ENCODE measurements at regions of chr11 and their contacts with region 1.

Region 1: GRCh38 chr11:83071567-83072349 is at the start of gene RAB30:
- DNase-seq: peak; percentile 86 to 99 (median 98)
- H3K4me3 ChIP-seq: peak within 1 kb of the TSS; percentile 61 to 96 (median 86)
- H3K27ac ChIP-seq: peak within 1 kb of the TSS; percentile 32 to 98 (median 93)
- H3K27me3 ChIP-seq: no peaks in the 10 kb centered on the region
- CTCF ChIP-seq: peak in 26 of 56 donors; percentile 7 to 52 (median 26)
- total RNA-seq, gene RAB30: 47.5 to 117 (median 77.0) TPM

Region 2: GRCh38 chr11:82692981-82693380 is 378.8 kb before region 1 on chr11:
- intact Hi-C with region 1: no loop called
- DNase-seq: no peak
- H3K4me3 ChIP-seq: no peak overlapping the region
- H3K27ac ChIP-seq: no peak overlapping the region
- H3K27me3 ChIP-seq: no peaks in the 10 kb centered on the region
- CTCF ChIP-seq: no peak

Region 3: DNA sequence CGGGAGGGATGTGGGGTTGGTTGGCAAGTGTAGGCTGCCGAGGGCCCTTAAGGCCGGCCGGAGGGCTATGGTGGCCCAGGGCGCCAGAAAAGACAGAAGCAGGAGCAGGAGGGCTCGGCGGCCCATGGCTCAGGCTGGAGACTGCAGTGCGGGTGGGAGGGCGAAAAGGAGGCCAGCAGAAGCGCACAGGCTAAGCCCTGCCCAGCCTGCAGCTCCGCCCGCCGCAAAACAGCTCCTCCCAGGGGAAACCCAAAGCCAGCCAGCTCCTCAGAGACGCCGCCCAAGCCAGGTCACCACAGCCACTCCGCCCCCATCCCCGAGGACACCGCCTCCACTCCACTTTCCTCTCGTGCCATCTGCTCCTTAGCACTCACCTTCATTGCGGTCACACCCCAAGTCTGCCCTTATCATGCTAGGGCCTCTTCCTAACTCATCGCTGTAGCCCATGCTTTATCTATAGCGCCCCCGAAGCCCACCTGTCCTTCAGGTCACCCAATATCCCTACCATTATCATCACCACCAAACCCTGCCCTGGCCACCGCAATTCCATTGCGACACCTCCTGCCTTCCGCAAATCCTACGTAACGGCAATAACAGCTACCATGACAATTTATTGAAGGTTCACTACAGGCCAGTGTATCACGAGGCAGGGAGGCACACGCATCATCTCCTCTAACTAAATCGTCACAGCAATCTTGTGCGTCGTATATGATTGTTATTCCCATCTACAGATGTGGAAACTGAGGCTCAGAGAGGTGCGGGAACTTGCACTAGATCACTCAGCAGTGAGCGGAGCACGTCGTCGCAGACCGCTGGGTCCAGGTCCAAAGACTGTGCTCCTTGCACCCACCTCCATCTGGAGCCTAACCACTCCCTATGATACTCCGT is 171.2 kb before region 1 on chr11 and contains the start of gene PRCP:
- intact Hi-C with region 1: loop called (anchors 5 kb)
- DNase-seq: peak; percentile 63 to 95 (median 88)
- H3K4me3 ChIP-seq: peak within 1 kb of the TSS; percentile 58 to 89 (median 78)
- H3K27ac ChIP-seq: peak within 1 kb of the TSS; percentile 7 to 95 (median 88)
- H3K27me3 ChIP-seq: no peaks in the 10 kb centered on the region
- CTCF ChIP-seq: peak in 28 of 56 donors; percentile 3 to 43 (median 25)
- total RNA-seq, gene PRCP: 38.4 to 137 (median 59.7) TPM

Region 4: DNA sequence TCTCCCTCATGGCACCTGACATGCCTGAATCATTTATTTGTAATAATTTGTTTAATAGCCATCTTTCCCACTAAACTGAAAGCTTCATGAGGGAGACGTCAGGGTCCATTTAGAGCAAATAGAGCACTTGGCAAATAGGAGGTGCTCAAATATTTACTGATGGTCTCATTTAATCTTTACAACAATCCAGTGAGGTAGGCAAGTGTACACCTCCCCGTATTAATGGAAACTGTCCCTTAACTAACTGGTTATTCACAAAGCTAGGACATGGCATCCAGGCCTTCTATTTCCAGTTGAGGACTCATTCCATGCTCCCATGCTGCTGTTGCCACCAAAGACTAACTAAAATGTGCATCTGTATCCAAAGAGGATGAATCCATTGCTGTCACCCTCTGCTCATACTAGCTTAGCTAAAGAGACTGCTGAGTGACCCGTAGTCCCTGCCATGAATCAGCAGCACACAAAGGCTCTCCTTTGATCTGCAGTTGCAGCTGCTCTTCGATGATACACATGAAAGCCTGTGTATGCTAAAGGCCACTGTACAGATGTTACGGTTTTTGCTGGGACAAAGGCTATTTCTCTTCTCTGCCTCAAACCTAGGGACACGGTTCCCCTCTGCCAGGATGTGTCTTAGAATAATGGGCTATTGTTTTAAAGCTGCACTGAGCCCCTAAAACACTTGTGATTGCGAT is 82.7 kb before region 1 on chr11:
- intact Hi-C with region 1: loop called (anchors 1 kb)
- DNase-seq: peak in 8 of 10 donors; percentile 62 to 87 (median 80)
- H3K4me3 ChIP-seq: peak overlapping the region in 34 of 59 donors; percentile 1 to 49 (median 22)
- H3K27ac ChIP-seq: peak overlapping the region in 58 of 59 donors; percentile 32 to 98 (median 90)
- H3K27me3 ChIP-seq: no peaks in the 10 kb centered on the region
- CTCF ChIP-seq: peak in 3 of 56 donors; percentile 9 to 23 (median 14)

Region 5: GRCh38 chr11:83033972-83034672 is 37.6 kb before region 1 on chr11:
- intact Hi-C with region 1: loop called (anchors 2 to 5 kb)
- DNase-seq: peak in 5 of 10 donors; percentile 19 to 55 (median 38)
- H3K4me3 ChIP-seq: peak overlapping the region; percentile 6 to 69 (median 49)
- H3K27ac ChIP-seq: peak overlapping the region; percentile 38 to 98 (median 89)
- H3K27me3 ChIP-seq: no peaks in the 10 kb centered on the region
- CTCF ChIP-seq: peak in 1 of 56 donors; percentile 22

Region 6: DNA sequence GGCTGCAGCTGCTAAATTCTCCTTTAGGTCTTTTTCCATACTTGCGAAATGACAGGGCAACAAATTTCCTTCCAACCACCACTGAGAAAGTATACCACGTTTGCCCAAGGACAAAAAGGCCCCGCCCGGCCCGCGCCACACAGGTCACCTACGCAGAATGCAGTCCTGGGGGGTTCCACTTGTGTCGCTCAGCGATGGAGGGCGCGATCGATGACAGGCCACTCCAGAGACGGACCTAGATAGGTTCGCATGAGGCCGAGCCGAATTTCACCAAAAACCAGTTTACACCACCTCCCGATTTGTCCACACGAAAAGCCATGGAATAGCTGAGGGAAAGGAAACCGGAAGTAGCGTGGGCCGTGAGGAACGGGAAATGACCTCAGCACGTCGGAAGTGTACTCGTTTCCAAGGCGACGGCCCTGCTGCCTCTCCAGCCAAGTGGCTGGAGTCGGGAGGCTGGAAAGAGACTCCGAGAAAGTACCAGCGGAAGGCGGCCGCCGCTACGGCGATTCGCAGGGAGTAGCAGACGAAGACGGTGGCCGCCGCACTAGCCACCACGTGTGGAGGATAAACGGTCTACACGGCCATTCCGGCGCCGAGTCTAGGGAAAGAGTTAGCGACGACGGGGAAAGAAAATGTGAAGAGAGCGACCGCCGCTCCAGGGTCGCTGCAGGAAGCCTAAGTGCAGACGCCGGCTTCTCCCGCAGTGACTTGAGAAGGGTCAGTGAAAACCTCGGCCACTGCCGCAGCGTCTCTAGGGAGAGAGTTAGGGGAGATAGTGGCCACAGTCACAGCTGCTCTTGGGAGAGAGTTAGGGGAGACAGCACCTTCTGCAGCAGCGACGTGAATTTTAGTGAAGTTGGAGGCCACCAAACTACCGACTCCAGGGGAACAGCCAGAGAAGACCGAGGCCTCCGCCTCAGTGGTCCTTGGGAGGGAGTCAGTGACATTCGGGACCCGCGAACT is 121.8 kb after region 1 on chr11 and contains the start of gene ANKRD42:
- intact Hi-C with region 1: loop called in 1 of 2 experiments (anchors 5 kb)
- DNase-seq: peak; percentile 90 to 97 (median 94)
- H3K4me3 ChIP-seq: peak within 1 kb of the TSS; percentile 63 to 100 (median 92)
- H3K27ac ChIP-seq: peak within 1 kb of the TSS in 58 of 59 donors; percentile 10 to 95 (median 83)
- H3K27me3 ChIP-seq: no peaks in the 10 kb centered on the region
- CTCF ChIP-seq: peak in 22 of 56 donors; percentile 1 to 51 (median 21)
- total RNA-seq, gene ANKRD42: 9.9 to 46.5 (median 32.4) TPM